HEK293 (cell line): ENCODE measurements at regions of chr1 and their contacts with region 1.

Region 1: GRCh38 chr1:44652445-44653106 is 21.7 kb downstream of the TMEM53 start:
- H3K4me3 ChIP-seq: no peak overlapping the region
- H3K27ac ChIP-seq: no peak overlapping the region
- H3K4me1 ChIP-seq: no peaks in the 10 kb centered on the region
- CTCF ChIP-seq: peak; percentile 93

Region 2: DNA sequence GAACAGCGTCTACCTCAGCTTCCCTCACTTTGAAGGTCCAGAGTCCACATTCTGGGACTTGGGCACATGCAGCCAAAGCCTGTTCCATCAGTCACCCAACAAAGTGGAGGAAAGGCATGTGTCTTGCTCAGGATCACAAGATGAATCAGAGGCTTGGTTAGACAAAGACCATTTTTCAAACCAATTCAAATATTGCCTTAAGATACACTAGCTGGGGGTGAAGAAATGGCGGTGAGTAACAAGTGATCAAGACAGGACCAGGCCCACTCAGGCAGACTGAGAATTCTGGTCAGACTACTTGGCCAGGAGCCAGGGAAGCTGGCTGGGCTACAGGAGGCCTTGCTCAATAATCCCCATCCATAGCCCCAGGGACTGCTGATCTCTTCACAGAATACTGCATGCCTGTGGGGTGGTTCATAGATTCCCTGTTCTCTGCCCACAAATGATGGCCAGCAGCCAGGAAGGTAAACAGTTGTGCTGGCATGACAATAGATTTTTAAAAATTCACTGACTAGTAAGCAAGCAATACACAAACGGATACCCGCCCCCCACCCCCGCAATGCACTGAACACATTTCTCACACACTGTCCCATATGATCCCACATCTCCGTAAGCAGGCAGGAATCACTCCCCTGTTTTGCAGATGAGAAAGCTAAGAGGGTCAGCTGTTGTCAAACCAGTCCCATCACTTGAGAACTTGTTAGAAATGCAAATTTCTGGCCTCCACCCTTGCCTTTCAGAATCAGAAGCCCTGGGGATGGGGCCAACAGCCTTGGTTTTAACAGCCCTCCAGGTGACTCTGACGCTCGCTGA is 324.7 kb before region 1 on chr1:
- CTCF ChIA-PET with region 1: interaction called, 13 read pairs
- POLR2A ChIA-PET with region 1: no interaction called
- H3K4me3 ChIP-seq: no peak overlapping the region
- H3K27ac ChIP-seq: peak overlapping the region; percentile 51
- H3K4me1 ChIP-seq: peaks cover 32% of the 10 kb centered on the region
- CTCF ChIP-seq: no peak

Region 3: GRCh38 chr1:44571712-44572571 is 80.6 kb before region 1 on chr1:
- CTCF ChIA-PET with region 1: interaction called, 31 read pairs
- POLR2A ChIA-PET with region 1: no interaction called
- H3K4me3 ChIP-seq: no peak overlapping the region
- H3K27ac ChIP-seq: no peak overlapping the region
- H3K4me1 ChIP-seq: no peaks in the 10 kb centered on the region
- CTCF ChIP-seq: peak; percentile 37; the same call in 1 of the 2 replicates

Region 4: DNA sequence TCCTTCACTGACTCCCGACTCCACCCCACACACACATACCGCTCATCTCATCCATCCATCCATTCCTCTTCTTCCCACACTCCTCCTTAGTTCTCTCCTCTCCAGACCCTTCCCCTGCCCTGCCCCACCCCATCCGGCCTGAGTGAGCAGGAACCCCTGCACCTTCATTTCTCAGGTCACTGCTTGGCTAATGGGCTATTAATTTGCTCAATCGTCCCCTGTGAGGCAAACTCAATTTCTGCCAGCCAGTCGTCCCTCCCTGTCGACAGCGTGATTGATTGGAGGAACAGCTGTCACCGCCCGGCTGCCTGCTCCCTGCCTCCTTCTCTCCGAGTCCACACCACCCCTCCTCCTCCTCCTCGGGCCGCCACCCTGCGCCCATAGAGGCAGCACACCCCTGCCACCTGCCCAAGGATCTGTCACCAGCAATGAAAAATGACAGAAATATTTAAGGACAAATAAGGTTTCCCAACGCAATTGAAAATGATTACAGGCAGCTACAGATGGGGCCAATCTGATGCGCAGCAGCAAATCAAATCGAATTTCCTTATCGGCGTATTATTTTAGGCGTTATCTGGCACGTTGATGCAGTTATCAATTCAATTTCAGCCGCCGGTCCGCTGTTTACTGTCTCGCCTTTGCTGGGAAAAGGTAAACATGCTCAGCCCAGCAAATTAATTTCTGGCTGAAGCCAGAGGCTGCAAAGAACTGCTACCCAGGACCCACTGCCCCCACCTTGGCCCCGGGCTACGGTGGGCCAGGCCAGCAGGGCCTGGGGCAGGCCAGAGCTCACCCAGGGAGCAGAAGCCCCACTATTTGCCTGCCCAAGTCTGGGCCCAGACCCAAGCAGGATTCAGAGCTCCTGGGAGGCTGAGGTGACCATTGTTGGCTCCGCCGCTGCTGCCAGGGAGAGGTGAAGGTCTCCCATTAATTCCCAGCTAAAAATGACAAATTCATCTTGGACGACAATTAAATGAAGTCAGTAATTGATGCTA is 49.6 kb before region 1 on chr1:
- CTCF ChIA-PET with region 1: interaction called, 85 read pairs
- POLR2A ChIA-PET with region 1: interaction called, 3 read pairs
- H3K4me3 ChIP-seq: no peak overlapping the region
- H3K27ac ChIP-seq: peak overlapping the region; percentile 16; the same call in 1 of the 2 replicates
- H3K4me1 ChIP-seq: peaks cover 19% of the 10 kb centered on the region
- CTCF ChIP-seq: no peak

Region 5: GRCh38 chr1:44616991-44617702 is 35.4 kb before region 1 on chr1:
- CTCF ChIA-PET with region 1: interaction called, 85 read pairs
- POLR2A ChIA-PET with region 1: no interaction called
- H3K4me3 ChIP-seq: peak overlapping the region; percentile 34
- H3K27ac ChIP-seq: no peak overlapping the region
- H3K4me1 ChIP-seq: peaks cover 10% of the 10 kb centered on the region
- CTCF ChIP-seq: no peak

Region 6: GRCh38 chr1:44664730-44665370 is 12.3 kb after region 1 on chr1:
- CTCF ChIA-PET with region 1: interaction called, 14 read pairs
- POLR2A ChIA-PET with region 1: no interaction called
- H3K4me3 ChIP-seq: no peak overlapping the region
- H3K27ac ChIP-seq: no peak overlapping the region
- H3K4me1 ChIP-seq: no peaks in the 10 kb centered on the region
- CTCF ChIP-seq: no peak